ENCODE measurements at regions of chr14 and their contacts with region 1.

Region 1: GRCh38 chr14:21014761-21015190 is 10.1 kb downstream of the NDRG2 start:
- DNase-seq: peak; percentile 75
- H3K4me3 ChIP-seq: no peak overlapping the region; a peak in 1 of 4 replicates
- H3K27ac ChIP-seq: no peak overlapping the region
- H3K4me1 ChIP-seq: no peaks in the 10 kb centered on the region; a peak in 1 of 4 replicates
- H3K27me3 ChIP-seq: peaks cover 15% of the 10 kb centered on the region
- CTCF ChIP-seq: peak; percentile 89
- EP300 ChIP-seq: no peak
- RAD21 ChIP-seq: peak; percentile 96

Region 2: GRCh38 chr14:20855652-20856291 is 159.0 kb before region 1 on chr14:
- CTCF ChIA-PET with region 1: no interaction called
- POLR2A ChIA-PET with region 1: no interaction called
- DNase-seq: peak; percentile 42
- H3K4me3 ChIP-seq: no peak overlapping the region
- H3K27ac ChIP-seq: no peak overlapping the region
- H3K4me1 ChIP-seq: peaks cover 0 to 3% of the 10 kb centered on the region in 2 experiments; a peak in 1 of 4 replicates
- H3K27me3 ChIP-seq: peaks cover 43% of the 10 kb centered on the region; the same call in 1 of the 2 replicates
- CTCF ChIP-seq: peak; percentile 66
- EP300 ChIP-seq: no peak
- RAD21 ChIP-seq: peak; percentile 60

Region 3: DNA sequence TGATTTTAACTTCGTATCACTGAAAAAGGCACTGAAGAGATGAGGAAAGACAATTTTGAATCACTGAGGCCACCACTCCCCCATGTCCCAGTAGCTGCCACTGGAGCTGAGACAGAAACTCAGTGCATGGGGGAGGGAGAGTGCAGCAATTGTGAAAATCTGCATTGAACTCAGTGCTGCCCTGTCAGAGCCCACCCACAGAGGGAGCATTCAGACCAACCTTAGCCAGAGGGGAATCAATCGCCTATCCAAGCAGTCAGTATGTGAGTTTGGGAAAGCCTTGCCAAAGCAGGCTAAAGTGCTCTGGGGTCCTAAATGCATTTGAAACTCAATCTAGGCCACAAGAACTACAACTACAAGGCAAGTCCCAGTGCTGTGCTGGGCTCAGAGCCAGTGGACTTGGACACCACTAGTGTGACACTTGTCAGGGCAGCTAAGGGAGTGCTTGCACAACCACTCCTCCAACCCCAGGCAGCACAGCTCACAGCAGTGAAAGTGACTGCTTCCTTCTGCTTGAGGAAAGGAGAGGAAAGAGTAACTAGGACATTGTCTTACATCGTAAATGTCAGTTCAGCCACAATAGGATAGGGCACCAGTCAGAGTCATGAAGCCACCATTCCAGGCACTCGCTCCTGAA is 110.3 kb before region 1 on chr14:
- CTCF ChIA-PET with region 1: no interaction called
- POLR2A ChIA-PET with region 1: no interaction called
- DNase-seq: no peak
- H3K4me3 ChIP-seq: no peak overlapping the region
- H3K27ac ChIP-seq: no peak overlapping the region
- H3K4me1 ChIP-seq: no peaks in the 10 kb centered on the region
- H3K27me3 ChIP-seq: no peaks in the 10 kb centered on the region
- CTCF ChIP-seq: no peak
- EP300 ChIP-seq: no peak
- RAD21 ChIP-seq: no peak

Region 4: GRCh38 chr14:20998664-20999366 is 16.0 kb before region 1 on chr14 and contains the start of gene SLC39A2:
- CTCF ChIA-PET with region 1: interaction called, 83 read pairs
- POLR2A ChIA-PET with region 1: no interaction called
- DNase-seq: no peak
- H3K4me3 ChIP-seq: no peak within 1 kb of the TSS
- H3K27ac ChIP-seq: no peak within 1 kb of the TSS
- H3K4me1 ChIP-seq: no peaks in the 10 kb centered on the region; a peak in 1 of 4 replicates
- H3K27me3 ChIP-seq: no peaks in the 10 kb centered on the region
- CTCF ChIP-seq: no peak
- EP300 ChIP-seq: no peak
- RAD21 ChIP-seq: no peak
- polyA plus RNA-seq, gene SLC39A2: not detected in 2 replicates

Region 5: DNA sequence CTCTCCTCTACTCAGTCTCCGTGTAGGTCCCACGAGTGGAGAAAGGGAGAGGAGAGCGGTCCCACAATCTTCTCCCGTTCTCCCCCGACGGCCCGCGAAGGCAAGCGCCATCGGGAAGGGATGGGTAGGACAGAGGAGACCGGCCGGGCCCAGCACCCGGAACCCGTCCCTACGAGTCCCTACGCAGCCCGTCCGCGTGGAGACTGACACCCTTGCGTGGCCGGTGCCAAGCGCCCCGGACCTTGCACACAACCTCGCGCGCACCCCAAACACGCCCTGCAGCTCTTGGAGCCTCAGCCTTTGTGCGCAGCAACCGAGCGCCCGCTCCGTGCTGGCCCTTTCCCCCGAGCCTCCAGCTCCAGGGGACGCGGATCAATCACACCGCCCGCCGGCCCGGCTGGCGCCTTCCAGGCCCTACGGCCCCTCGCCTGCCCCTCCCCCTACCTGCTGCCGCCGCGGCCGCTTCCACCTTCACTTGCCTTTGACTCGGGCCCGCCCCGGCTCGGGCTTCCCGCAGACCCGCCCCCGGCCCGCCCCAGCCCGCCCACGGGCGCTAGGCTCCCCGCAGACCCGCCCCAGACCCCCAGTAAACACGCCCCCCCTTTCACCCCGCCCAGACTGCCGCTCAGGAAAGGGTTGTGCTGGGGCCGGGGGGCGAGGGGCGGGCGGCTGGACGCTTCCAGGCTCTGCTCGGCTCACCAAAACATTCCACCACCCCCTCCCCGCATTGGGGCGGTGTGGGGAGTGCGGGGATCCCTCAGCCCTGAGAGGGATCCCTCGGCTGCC is 10.0 kb after region 1 on chr14 and contains the start of gene NDRG2:
- CTCF ChIA-PET with region 1: interaction called, 43 read pairs
- POLR2A ChIA-PET with region 1: interaction called, 11 read pairs
- DNase-seq: peak; percentile 95
- H3K4me3 ChIP-seq: peak within 1 kb of the TSS; percentile 56 to 68
- H3K27ac ChIP-seq: peak within 1 kb of the TSS in 1 of 2 experiments; percentile 55; a peak in 1 of 4 replicates
- H3K4me1 ChIP-seq: peaks cover 0 to 10% of the 10 kb centered on the region in 2 experiments; a peak in 1 of 4 replicates
- H3K27me3 ChIP-seq: peaks cover 4% of the 10 kb centered on the region; the same call in 1 of the 2 replicates
- CTCF ChIP-seq: no peak
- EP300 ChIP-seq: no peak
- RAD21 ChIP-seq: no peak
- polyA plus RNA-seq, gene NDRG2: 15.8 and 15.9 TPM in 2 replicates

Region 6: GRCh38 chr14:21049271-21049673 is 34.5 kb after region 1 on chr14:
- CTCF ChIA-PET with region 1: interaction called, 248 read pairs
- POLR2A ChIA-PET with region 1: interaction called, 6 read pairs
- DNase-seq: no peak
- H3K4me3 ChIP-seq: no peak overlapping the region
- H3K27ac ChIP-seq: no peak overlapping the region
- H3K4me1 ChIP-seq: peaks cover 0 to 4% of the 10 kb centered on the region in 2 experiments; a peak in 1 of 4 replicates
- H3K27me3 ChIP-seq: no peaks in the 10 kb centered on the region
- CTCF ChIP-seq: no peak
- EP300 ChIP-seq: no peak
- RAD21 ChIP-seq: no peak

Region 7: GRCh38 chr14:21078287-21078686 is 63.5 kb after region 1 on chr14:
- CTCF ChIA-PET with region 1: interaction called, 14 read pairs
- POLR2A ChIA-PET with region 1: no interaction called
- DNase-seq: no peak
- H3K4me3 ChIP-seq: no peak overlapping the region
- H3K27ac ChIP-seq: no peak overlapping the region
- H3K4me1 ChIP-seq: peaks cover 0 to 13% of the 10 kb centered on the region in 2 experiments; a peak in 1 of 4 replicates
- H3K27me3 ChIP-seq: no peaks in the 10 kb centered on the region
- CTCF ChIP-seq: no peak
- EP300 ChIP-seq: no peak
- RAD21 ChIP-seq: no peak

Region 8: GRCh38 chr14:21680072-21680471 is 665.3 kb after region 1 on chr14:
- CTCF ChIA-PET with region 1: no interaction called
- POLR2A ChIA-PET with region 1: no interaction called
- DNase-seq: no peak
- H3K4me3 ChIP-seq: no peak overlapping the region
- H3K27ac ChIP-seq: no peak overlapping the region
- H3K4me1 ChIP-seq: no peaks in the 10 kb centered on the region; a peak in 1 of 4 replicates
- H3K27me3 ChIP-seq: no peaks in the 10 kb centered on the region; the same call in 1 of the 2 replicates
- CTCF ChIP-seq: no peak
- EP300 ChIP-seq: no peak
- RAD21 ChIP-seq: no peak